PC-3 (cell line): ENCODE measurements at regions of chr2 and their contacts with region 1.

Region 1: DNA sequence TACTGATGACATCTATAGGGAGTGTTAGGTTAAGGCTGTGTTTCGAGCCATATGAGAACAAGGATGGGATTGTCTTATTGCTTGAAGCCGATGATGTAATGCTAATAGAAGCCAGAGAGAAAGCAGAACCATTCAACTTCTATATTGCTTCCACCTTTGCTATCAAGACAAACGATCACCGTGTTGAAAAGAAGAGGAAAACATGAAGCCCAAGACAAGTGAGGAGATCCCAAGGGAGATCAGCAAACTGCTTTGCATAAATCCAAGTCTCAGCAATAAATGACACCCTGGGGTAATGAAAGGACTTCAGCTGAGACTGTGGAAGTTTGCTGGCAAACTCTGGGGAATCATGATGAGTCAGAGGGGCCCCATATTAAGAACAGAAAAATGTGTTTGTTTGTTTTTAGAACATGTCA is 206.2 kb downstream of the NCKAP5 start:
- DNase-seq: peak; percentile 46
- ATAC-seq: peak; percentile 90
- H3K4me3 ChIP-seq: no peak overlapping the region
- H3K27ac ChIP-seq: no peak overlapping the region
- H3K4me1 ChIP-seq: peaks cover 13% of the 10 kb centered on the region; the same call in 1 of the 2 replicates
- H3K27me3 ChIP-seq: no peaks in the 10 kb centered on the region
- CTCF ChIP-seq: no peak

Region 2: DNA sequence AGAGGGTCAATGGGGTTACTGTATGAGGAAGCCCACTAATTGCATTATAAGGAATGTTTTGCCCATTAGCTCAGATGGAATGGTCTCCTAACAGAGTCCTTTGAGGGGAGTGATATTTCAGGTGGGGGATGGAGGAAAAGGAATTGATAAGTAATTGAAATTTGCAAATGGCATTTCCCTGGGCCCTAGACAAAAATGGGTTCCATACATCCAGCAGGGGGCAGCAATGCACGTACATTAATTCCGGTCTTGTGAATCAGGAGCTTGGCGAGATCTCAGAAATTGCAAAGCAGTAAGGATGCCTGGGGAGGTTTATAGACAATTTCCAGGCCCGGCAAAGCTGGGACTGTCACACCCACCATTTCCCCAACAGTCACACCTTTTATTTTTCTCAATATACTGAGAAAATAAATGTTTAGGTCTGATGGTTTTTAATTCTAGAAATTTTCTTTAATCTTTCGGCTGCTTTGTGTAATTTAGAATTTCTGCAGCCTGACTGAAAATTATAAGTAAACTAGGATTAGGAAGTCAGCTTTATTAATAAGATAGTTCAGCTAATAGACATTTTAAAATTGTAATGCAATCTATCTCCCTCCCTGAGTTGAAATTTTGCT is 814.9 kb before region 1 on chr2:
- CTCF ChIA-PET with region 1: interaction called, 10 read pairs
- POLR2A ChIA-PET with region 1: no interaction called
- intact Hi-C with region 1: no loop called
- DNase-seq: peak; percentile 82
- ATAC-seq: peak; percentile 65
- H3K4me3 ChIP-seq: no peak overlapping the region
- H3K27ac ChIP-seq: no peak overlapping the region
- H3K4me1 ChIP-seq: peaks cover 14% of the 10 kb centered on the region
- H3K27me3 ChIP-seq: no peaks in the 10 kb centered on the region
- CTCF ChIP-seq: peak; percentile 85

Region 3: GRCh38 chr2:132884705-132885104 is 477.4 kb before region 1 on chr2:
- CTCF ChIA-PET with region 1: no interaction called
- POLR2A ChIA-PET with region 1: no interaction called
- intact Hi-C with region 1: no loop called
- DNase-seq: no peak
- ATAC-seq: no peak
- H3K4me3 ChIP-seq: no peak overlapping the region
- H3K27ac ChIP-seq: no peak overlapping the region
- H3K4me1 ChIP-seq: no peaks in the 10 kb centered on the region
- H3K27me3 ChIP-seq: no peaks in the 10 kb centered on the region
- CTCF ChIP-seq: no peak